Lower leg skin (tissue), 4 donors: ENCODE measurements at regions of chr21 and their contacts with region 1.

Region 1: GRCh38 chr21:32569261-32570230 is 15.8 kb downstream of the TCP10L start:
- DNase-seq: peak; percentile 62 to 95
- H3K4me3 ChIP-seq: peak overlapping the region; percentile 50
- CTCF ChIP-seq: peak in 1 of 3 donors; percentile 65
- POLR2A ChIP-seq: no peak

Region 2: DNA sequence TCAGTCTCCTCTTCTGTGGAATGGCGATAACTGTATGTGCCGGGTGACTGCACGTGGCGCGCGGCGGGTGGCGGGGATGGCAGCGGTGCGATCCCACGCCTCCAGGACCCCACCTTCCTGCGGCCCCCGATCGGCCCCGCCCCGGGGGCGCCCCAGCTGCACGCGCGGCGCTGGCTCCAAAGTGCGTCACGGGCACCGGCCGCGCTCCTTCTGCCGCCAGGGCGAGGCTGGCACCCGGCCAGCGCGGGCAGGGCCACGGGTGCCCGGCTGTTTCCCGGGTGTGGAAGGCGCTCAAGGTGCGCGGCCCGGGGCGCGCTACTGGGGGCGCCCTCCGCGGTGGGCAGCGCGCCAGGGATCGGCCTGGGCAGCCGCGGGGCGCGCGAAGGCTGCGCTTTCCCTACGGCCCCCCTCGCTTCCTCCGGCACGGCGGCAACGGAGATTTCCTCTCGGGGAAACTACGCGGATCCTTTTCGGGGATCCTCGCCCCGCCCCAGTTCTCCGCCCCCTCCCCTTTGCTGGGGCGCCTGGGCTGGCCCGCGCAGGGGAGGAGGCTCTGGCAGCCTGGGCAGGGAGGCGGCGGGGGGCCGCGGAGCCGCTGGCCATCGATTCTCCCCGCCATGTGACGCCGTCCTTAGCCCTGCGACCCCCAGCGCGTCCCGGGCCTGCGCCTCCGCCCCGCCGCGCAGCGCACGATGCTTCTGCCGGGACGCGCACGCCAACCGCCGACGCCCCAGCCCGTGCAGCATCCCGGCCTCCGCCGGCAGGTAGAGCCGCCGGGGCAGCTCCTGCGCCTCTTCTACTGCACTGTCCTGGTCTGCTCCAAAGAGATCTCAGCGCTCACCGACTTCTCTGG is 157.2 kb before region 1 on chr21 and contains the start of gene EVA1C:
- intact Hi-C with region 1: loop called (anchors 10 kb)
- DNase-seq: peak; percentile 56 to 95
- H3K4me3 ChIP-seq: peak within 1 kb of the TSS; percentile 65
- CTCF ChIP-seq: no peak
- POLR2A ChIP-seq: peak in 1 of 2 donors; percentile 23
- total RNA-seq, gene EVA1C: 57.4 to 108 (median 66.7) TPM